ENCODE measurements at regions of chr11 and their contacts with region 1.

Region 1: GRCh38 chr11:76799066-76799804 is 16.1 kb downstream of the TSKU start:
- DNase-seq: peak; percentile 67 to 97 (median 78)

Region 2: GRCh38 chr11:76524919-76525318 is 274.3 kb before region 1 on chr11:
- intact Hi-C with region 1: no loop called
- DNase-seq: no peak

Region 3: DNA sequence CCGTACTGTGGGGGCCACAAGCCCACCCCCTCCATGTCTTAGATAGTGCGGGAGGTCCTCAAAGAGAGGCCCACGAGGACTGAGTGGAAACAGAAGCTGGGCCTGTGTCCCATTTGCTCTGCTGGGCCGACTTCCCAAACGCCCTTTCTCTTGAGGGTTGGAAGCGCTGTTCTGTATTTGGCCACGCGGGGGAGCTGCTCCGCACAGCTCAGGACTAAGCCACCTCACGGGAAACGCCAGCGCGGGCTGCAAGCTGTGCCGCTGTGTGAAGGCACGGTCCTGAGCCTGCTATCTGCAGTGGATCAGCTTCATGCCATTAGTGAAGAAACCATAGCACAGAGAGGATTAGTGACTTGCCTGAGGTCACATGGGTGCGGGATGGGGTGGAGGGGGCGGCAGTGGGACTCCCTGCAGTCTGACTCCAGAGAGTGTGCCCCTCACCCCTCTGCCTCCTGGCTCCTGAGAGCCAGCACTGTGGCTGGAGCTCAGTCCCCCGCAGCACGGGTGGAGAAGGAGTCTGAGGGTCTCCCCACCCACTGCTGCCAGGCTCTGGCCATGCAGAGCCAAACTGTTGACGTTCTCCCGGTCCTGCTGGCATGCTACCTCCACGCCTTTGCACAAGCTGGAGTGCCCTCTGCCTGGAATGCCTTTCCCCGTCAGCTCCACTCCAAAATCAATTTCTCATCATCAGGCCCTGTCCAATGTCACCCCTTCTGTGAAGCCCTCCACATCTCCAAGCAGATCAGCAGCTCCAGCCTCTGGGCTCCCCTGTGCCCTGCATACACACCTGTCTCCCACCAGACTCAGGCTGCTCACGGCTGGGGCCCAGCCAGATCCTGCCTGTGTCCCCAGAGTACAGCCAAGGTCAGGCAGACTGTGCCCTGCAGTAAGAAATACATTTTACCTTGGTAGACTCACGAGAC is 77.2 kb before region 1 on chr11:
- intact Hi-C with region 1: no loop called
- DNase-seq: peak; percentile 78 to 98 (median 90)

Region 4: DNA sequence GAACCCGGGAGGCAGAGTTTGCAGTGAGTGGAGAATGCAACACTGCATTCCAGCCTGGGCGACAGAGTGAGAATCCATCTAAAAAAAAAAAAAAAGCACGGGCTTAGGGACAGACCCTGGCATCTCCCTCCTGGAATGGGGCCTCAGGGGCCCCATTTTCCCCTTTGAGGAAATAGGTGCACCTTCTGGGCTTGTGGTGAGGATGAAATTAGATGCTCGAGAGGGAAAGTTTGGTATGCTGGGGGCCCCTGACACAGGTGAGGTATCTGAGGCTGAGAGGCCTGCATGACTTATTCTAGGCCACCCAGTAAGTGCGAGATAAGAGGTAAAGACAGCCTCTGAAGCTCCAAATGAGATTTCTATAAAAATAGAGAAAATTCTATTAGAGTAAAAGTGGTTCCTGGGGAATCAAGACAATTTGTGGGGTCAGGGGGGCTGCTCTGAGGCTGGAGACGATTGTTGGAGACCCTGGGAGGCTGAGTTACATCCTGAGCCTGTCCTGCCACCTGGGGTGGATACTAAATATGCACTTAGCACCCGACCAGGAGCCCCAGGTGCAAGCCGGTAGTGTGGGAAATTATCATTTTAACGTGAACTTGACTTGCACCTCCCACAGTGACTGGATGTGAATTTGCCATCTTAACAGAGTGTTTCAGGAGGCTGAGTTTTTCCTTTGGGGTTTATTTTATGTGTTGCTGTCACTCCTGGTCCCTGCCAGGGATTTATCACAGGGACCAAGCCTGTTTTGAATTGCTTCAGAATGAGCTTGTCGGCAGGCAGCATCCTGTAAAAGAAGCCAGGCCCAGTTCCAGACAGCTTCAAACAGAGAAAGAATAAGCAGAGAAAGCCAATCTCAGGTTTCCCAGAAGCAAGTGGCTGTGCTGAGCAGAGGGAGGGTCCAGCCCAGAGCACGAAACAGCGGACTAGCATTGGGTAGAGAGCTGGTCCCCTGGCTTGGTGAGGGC is 64.5 kb before region 1 on chr11:
- intact Hi-C with region 1: loop called (anchors 1 kb)
- DNase-seq: peak in 1 of 10 donors; percentile 24

Region 5: DNA sequence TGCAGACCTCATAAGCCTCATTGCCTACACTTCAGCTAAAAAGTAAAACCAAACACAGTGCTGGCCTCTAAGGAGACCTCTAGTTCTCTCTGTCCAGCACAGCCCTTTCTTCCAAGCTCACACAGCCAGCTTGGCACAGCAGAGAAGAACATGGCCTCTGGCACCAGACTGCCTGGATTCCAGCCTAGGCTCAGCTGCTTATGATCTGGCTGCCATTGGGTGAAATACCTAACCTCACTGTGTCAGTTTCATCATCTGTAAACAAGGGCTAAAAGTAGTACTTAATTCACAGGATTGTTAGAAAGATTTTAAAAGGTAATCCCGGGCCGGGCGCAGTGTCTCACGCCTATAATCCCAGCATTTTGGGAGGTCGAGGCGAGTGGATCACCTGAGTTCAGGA is 51.6 kb after region 1 on chr11:
- intact Hi-C with region 1: no loop called
- DNase-seq: peak in 1 of 10 donors; percentile 62